ENCODE measurements at regions of chr2 and their contacts with region 1.

Region 1: GRCh38 chr2:46164581-46165301 is 132.5 kb upstream of the EPAS1 start:
- DNase-seq: peak; percentile 76
- H3K4me3 ChIP-seq: no peak overlapping the region
- H3K27ac ChIP-seq: peak overlapping the region; percentile 10
- H3K4me1 ChIP-seq: peaks cover 39% of the 10 kb centered on the region
- H3K27me3 ChIP-seq: no peaks in the 10 kb centered on the region
- CTCF ChIP-seq: no peak

Region 2: DNA sequence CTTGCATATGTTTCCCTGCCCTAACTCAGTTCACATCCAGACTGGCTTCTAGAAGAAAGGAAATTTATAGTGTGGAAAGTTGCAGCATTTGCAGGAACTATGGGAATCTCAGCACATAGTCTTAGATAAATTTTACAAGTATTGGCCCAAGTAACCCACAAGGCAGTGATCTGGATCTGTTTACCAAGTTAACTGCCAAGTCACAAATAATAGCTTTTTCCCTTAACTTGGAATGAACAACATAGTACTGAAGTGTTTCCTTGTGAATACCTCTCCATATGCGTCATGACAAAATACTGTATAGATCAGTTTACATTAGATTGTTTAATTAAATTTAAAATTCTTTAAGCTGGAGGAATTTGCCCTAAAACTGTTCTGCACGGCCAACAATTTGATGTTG is 123.3 kb before region 1 on chr2:
- CTCF ChIA-PET with region 1: no interaction called
- dilution Hi-C with region 1: loop called (anchors 5 kb)
- in situ Hi-C with region 1: no loop called
- intact Hi-C with region 1: no loop called
- DNase-seq: no peak
- H3K4me3 ChIP-seq: no peak overlapping the region
- H3K27ac ChIP-seq: no peak overlapping the region
- H3K4me1 ChIP-seq: no peaks in the 10 kb centered on the region
- H3K27me3 ChIP-seq: no peaks in the 10 kb centered on the region
- CTCF ChIP-seq: no peak

Region 3: DNA sequence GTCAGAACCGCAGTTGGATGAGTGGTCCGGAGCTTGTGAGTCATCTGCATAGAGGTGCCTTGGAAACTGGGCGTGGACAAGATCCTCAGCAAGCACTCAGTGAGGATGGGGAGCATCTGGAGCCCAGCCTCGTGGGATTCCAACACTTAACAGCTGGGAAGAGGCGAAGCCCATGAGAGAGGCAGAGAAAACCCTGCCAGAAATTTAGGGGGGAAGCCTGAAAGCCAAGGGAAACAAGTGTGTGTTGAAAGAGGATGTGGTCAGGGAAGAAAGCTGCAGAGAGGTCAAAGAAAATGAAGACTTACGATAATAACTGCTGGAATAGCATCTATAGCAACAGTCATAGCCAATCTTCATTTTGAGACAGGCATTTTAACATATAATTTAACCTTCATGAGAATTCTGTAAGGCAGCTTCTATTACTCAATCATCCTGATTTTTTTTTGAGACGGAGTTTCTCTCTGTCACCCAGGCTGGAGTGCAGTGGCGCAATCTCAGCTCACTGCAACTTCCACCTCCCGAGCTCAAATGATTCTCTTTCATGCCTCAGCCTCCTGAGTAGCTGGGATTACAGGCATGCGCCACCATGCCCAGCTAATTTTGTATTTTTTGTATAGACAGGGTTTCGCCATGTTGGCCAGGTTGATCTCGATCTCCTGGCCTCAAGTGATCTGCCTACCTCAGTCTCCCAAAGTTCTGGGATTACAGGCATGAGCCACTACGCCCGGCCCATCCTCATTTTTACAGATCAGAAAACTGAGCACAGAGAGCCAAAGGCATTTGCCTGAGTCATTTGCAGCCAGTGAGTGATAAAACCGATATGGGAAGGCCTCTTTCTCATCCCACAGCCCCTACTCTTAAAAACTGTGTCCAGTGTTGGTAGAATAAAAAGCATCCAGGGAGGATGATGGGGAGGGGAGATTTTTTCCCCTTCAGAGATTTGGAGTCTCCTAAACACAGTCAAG is 81.9 kb before region 1 on chr2:
- CTCF ChIA-PET with region 1: no interaction called
- dilution Hi-C with region 1: loop called (anchors 5 kb)
- in situ Hi-C with region 1: no loop called
- intact Hi-C with region 1: no loop called
- DNase-seq: no peak
- H3K4me3 ChIP-seq: no peak overlapping the region
- H3K27ac ChIP-seq: no peak overlapping the region
- H3K4me1 ChIP-seq: peaks cover 6% of the 10 kb centered on the region
- H3K27me3 ChIP-seq: no peaks in the 10 kb centered on the region
- CTCF ChIP-seq: no peak

Region 4: DNA sequence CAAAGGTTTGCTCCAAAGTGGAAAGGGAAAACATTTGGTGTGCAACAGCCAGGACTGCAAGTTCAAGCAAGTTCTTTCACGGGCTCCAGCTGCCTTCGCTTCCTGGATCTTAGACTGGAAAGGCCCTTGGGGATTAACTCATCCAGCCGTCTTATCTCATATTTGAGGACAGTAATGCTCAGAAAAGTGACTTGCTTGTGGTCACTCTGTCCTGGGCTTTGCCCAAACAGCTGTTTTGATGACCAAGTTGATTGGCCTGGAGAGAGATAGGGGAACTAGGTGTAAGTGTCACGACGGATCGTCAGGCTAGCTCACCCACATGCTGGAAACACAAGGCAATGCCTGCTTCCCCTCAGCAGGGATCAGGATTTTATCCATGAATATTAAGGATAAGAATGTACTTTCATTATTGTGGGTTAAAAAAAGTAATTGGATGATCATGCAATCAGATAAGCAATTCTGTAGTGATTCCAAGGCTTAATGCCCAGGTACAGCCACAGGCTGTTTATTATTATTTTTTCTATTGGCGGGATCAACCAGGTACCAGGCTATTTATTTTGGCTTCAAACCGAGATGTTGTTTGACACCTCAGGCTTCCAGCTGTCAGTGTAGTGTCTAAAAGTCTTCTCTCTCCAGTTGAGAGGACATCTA is 30.1 kb before region 1 on chr2:
- CTCF ChIA-PET with region 1: no interaction called
- dilution Hi-C with region 1: no loop called
- in situ Hi-C with region 1: no loop called
- intact Hi-C with region 1: loop called (anchors 2 kb)
- DNase-seq: peak; percentile 82
- H3K4me3 ChIP-seq: no peak overlapping the region
- H3K27ac ChIP-seq: peak overlapping the region; percentile 55
- H3K4me1 ChIP-seq: peaks cover 16% of the 10 kb centered on the region
- H3K27me3 ChIP-seq: no peaks in the 10 kb centered on the region
- CTCF ChIP-seq: no peak

Region 5: DNA sequence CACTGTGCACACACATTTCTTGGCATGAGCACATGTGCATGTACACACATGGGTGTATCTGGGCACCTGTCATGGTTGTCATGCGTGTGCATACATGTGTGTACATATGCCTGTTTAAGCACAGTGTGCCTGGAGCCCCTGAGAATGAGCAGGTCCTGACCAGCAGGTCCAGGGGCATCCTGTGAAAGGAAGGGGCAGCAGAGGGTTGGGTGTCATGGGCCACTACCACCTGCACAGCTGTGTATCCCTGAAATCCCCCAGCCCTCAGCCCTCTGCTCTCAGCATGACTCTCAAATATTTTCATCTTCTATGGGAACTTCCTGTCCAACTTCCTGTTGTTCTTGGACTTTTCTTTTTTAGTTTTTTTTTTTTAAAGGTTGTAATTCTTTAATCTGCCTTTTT is 35.5 kb after region 1 on chr2:
- CTCF ChIA-PET with region 1: no interaction called
- dilution Hi-C with region 1: no loop called
- in situ Hi-C with region 1: no loop called
- intact Hi-C with region 1: no loop called
- DNase-seq: no peak
- H3K4me3 ChIP-seq: no peak overlapping the region
- H3K27ac ChIP-seq: no peak overlapping the region
- H3K4me1 ChIP-seq: peaks cover 17% of the 10 kb centered on the region
- H3K27me3 ChIP-seq: no peaks in the 10 kb centered on the region
- CTCF ChIP-seq: no peak

Region 6: GRCh38 chr2:46239847-46240181 is 75.1 kb after region 1 on chr2:
- CTCF ChIA-PET with region 1: no interaction called
- dilution Hi-C with region 1: loop called (anchors 5 kb)
- in situ Hi-C with region 1: no loop called
- intact Hi-C with region 1: no loop called
- DNase-seq: no peak
- H3K4me3 ChIP-seq: no peak overlapping the region
- H3K27ac ChIP-seq: no peak overlapping the region
- H3K4me1 ChIP-seq: peaks cover 3% of the 10 kb centered on the region
- H3K27me3 ChIP-seq: no peaks in the 10 kb centered on the region
- CTCF ChIP-seq: no peak